ENCODE measurements at regions of chr1 and their contacts with region 1.

Region 1: DNA sequence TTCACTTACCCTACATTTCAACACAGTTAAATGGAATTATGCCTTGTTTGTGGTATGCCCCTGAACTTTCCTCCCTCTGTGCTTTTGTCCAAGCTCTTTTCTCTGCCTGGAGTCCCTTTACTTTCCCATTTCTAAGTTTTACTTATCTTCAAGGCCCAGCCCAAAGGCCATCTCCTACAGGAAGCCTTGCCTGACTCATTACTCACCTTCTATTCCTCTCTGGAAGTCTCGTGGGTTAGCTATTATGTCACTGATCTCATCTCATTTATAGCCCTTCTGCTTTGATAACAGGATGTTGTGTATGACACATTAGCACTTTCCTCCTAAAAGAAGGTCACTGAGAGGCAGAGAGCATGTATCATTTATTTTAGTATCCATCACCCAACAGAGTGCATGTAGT is 78.8 kb upstream of the CD1D start:
- DNase-seq: peak; percentile 21
- H3K4me3 ChIP-seq: no peak overlapping the region
- H3K27me3 ChIP-seq: peaks cover 1% of the 10 kb centered on the region; the same call in 1 of the 2 replicates
- CTCF ChIP-seq: no peak

Region 2: GRCh38 chr1:158117854-158118704 is 16.2 kb after region 1 on chr1:
- CTCF ChIA-PET with region 1: interaction called, 187 read pairs
- POLR2A ChIA-PET with region 1: no interaction called
- DNase-seq: no peak
- H3K4me3 ChIP-seq: no peak overlapping the region
- H3K27me3 ChIP-seq: peaks cover 7% of the 10 kb centered on the region
- CTCF ChIP-seq: peak; percentile 71

Measured in BJ (cell line).